Astrocyte of the cerebellum (primary cell): ENCODE measurements at regions of chrX and their contacts with region 1.

Region 1: GRCh38 chrX:21985332-21985777 is 44.8 kb downstream of the SMS start:
- DNase-seq: peak; percentile 71
- H3K4me3 ChIP-seq: no peak overlapping the region
- CTCF ChIP-seq: peak; percentile 93

Region 2: DNA sequence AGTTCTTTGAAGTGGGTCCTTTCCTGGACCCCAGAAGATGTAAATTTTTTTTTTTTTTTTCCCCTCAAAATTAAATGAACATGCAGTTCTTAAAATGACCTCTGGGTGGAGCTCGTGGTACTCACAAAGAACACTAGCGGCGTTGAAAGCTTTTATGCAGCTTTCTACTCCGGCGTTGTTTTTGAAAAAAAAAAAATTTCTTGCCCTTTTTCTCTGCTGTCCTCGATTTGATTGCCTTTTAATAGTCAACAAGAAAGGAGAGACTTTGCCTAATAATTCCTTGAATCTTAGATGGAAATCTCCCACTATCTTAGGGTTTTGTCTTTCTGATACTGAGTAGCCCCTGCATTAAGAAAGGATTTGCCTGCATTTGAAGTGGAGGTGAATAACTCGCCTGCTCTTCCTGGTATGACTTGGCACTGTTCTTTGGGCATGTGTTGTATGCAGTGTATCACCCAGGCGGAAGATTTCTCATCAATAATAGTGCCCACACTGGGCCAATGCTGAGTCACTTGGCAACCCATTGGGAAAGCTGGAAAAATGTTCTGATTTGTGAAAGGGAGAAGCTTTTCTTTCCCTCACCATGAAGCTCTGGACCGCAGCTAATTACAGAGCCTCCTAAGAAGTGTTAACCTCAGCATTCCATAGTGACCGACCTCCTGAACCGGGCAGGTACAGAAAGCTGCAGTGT is 150.8 kb after region 1 on chrX:
- in situ Hi-C with region 1: loop called (anchors 25 kb)
- DNase-seq: peak; percentile 43
- H3K4me3 ChIP-seq: no peak overlapping the region
- CTCF ChIP-seq: peak; percentile 65